MCF 10A (cell line): ENCODE measurements at regions of chr2 and their contacts with region 1.

Region 1: DNA sequence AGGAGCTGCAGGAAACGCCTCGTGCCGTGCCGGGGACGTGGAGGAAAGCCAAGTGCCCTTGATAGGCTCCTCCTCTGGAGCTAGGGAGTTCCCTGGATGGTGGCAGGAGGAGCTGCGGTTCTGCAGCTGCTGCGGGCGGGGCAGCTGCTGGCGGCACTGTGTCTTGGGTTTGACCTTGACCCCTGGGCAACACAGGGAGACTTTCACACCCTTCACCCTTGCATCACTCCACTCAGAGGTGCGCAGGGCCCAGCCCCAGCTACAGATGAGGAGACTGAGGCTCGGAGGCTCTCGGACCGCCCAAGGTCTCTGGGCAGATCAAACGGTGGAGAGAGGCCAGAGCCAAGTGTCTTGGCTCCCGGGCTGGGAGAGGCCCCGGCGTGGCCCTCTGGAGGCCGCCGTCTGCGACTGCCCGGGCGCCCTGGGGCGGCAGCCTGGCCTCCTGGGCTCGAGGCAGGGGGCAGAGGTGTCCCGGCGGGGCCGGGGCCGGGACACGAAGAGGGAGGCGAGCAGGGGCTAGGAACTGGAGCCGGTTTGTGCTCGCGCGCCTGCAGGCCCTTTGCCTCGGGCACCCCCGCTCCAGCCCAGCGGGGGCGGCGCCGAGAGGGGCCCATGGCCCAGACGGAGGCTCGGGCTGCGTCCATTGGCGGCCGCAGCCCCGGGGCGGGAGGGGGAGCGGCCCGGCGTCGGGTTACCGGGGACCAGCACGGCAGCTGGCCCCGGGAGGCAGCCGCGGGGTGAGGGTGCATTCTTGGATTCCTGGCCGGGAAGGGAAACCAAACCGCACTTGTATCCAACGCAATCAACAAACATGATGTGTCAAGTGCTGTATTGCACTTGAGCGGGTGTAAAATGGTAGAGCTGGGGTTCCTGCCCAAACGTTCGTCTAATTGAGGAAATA is 129.6 kb upstream of the SLC1A4 start:
- DNase-seq: peak; percentile 96
- H3K4me3 Mint-ChIP-seq: no peak overlapping the region
- H3K27ac Mint-ChIP-seq: no peak overlapping the region
- H3K4me1 Mint-ChIP-seq: peaks cover 11% of the 10 kb centered on the region
- H3K27me3 Mint-ChIP-seq: no peaks in the 10 kb centered on the region
- CTCF ChIP-seq: peak; percentile 15

Region 2: DNA sequence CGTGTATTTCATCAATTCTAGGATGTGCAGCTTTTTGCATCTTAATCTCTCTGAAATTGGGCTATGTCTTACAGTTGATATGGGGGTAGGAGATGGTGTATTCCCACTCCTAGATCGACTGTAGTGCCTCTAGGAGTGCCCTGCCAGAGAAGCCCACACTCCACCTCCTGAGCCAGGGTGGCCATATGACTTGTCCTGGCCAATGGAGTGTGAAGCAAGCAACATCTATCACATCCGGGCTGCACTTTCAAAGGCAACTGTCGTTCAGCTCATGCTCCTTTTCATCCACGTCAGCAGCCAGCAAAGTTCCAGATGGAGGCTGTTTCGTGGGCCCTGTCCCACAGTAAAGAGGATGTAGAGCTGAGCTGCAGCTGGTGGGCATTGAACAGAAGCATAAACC is 19.7 kb before region 1 on chr2:
- CTCF ChIA-PET with region 1: interaction called, 5 read pairs
- POLR2A ChIA-PET with region 1: interaction called, 21 read pairs
- intact Hi-C with region 1: loop called (anchors 2 kb)
- DNase-seq: no peak
- H3K4me3 Mint-ChIP-seq: no peak overlapping the region
- H3K27ac Mint-ChIP-seq: no peak overlapping the region
- H3K4me1 Mint-ChIP-seq: peaks cover 41% of the 10 kb centered on the region
- H3K27me3 Mint-ChIP-seq: no peaks in the 10 kb centered on the region
- CTCF ChIP-seq: no peak

Region 3: GRCh38 chr2:64848363-64848762 is 11.2 kb before region 1 on chr2:
- CTCF ChIA-PET with region 1: interaction called, 5 read pairs
- POLR2A ChIA-PET with region 1: interaction called, 14 read pairs
- intact Hi-C with region 1: no loop called
- DNase-seq: no peak
- H3K4me3 Mint-ChIP-seq: no peak overlapping the region
- H3K27ac Mint-ChIP-seq: peak overlapping the region; percentile 35
- H3K4me1 Mint-ChIP-seq: peaks cover 20% of the 10 kb centered on the region
- H3K27me3 Mint-ChIP-seq: no peaks in the 10 kb centered on the region
- CTCF ChIP-seq: no peak